ENCODE measurements at regions of chr2 and their contacts with region 1.

Region 1: DNA sequence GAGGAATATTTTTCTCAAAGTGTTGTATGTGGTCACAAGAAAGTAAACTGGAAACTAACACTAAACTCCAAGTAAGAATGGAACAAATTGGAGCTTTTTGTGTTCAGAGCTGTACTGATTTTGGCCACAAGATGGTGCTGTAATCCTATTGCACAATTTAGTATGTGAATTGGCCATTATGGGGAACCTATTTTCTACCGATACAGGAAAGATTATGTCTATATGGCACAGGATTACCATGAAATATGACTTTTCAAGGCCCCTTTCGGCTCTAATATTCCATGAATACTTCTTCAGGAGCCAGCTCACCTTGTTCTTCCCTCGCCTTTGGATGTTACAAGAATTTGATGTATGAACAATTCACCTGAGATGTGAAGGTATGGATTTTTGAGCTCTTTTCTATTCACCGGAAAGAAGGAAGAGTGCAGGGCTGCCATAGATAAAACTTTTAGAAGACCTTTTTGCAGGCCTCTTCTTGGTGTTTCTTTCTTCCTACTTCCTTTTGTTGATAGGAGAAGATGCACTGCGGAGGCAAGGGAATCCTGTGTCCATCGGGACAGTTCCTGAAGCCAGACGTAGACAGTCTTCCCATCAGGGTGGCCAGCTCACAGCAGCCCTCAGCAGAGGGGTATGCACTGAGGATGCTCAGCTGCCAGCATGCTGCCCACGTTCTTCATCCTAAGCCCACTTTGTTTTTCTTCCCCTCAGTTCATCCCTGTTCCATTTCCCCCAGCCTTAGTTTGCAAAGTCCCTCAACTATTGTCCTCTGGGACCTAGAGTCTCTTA is 13.3 kb downstream of the MRPL44 start:
- DNase-seq: peak in 1 of 2 experiments; percentile 64
- ATAC-seq: peak; percentile 74 to 83; a peak in 5 of 6 replicates
- H3K4me3 ChIP-seq: no peak overlapping the region
- H3K27ac ChIP-seq: no peak overlapping the region
- H3K4me1 ChIP-seq: no peaks in the 10 kb centered on the region
- CTCF ChIP-seq: peak; percentile 96
- EP300 ChIP-seq: no peak
- POLR2A ChIP-seq: no peak
- RAD21 ChIP-seq: peak; percentile 93 to 96

Region 2: GRCh38 chr2:223959688-223960087 is 10.8 kb before region 1 on chr2:
- CTCF ChIA-PET with region 1: interaction called, 31 read pairs
- POLR2A ChIA-PET with region 1: no interaction called
- DNase-seq: no peak
- ATAC-seq: no peak
- H3K4me3 ChIP-seq: no peak overlapping the region
- H3K27ac ChIP-seq: no peak overlapping the region
- H3K4me1 ChIP-seq: peaks cover 21% of the 10 kb centered on the region; the same call in 2 of the 3 replicates
- CTCF ChIP-seq: no peak
- EP300 ChIP-seq: no peak
- POLR2A ChIP-seq: no peak
- RAD21 ChIP-seq: no peak

Region 3: DNA sequence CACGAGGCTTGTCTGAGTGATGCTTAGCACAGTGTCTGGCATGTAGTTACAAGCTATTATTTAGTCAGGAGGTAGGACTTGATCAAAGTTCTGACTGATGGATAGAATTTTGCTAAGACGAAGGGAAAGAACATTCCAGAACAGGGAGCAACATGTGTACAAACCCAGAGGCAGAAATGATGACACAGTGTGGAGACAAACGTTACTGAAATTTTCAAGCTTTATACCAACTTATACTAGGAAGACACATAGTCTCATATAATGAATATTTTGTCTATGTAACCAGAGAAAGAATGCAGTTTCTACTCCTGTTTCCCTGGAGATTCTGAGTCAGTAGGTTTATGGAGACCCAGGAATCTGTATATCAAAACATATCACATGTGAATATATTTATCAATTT is 308.0 kb after region 1 on chr2:
- CTCF ChIA-PET with region 1: interaction called, 148 read pairs
- POLR2A ChIA-PET with region 1: no interaction called
- DNase-seq: no peak
- ATAC-seq: no peak; a peak in 2 of 6 replicates
- H3K4me3 ChIP-seq: no peak overlapping the region
- H3K27ac ChIP-seq: no peak overlapping the region
- H3K4me1 ChIP-seq: no peaks in the 10 kb centered on the region
- CTCF ChIP-seq: no peak
- EP300 ChIP-seq: no peak
- POLR2A ChIP-seq: no peak
- RAD21 ChIP-seq: no peak

Region 4: DNA sequence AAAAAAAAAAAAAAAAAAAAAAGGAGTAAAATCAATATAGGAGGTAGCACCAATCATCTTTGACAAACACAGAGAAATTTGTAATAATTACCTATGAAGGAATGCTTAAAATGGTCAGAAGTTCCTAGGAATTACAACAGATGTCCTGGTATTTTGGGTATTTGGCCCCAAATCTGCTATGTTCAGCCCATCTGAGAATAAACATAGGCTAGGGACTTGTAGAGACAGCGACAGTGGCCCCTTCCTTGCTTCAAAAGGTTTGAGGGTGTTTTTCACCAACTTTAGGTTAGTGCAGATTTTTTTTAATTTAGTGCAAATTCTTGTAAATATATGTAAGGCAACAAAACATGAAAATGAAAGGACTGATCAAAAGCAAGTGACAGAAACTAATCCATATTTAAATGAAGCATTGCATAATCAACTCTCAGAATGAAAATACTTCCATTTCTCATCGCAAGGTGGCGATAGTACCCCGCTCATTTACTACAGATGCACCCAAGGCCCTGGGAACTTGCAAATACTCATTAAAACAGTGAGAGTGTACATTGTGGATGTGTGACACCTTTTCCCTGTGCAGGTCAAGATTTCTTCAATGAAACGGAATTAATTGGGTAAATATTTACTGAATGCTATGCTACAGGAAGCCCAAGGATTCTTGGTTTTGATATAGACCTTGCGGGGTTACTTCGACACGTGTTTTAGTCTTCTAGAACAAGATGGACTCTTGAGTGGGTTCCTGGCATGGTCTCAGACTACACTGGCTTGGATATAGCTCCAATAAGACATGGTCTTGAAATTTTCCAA is 386.8 kb after region 1 on chr2:
- CTCF ChIA-PET with region 1: interaction called, 16 read pairs
- POLR2A ChIA-PET with region 1: no interaction called
- DNase-seq: peak; percentile 47 to 69
- ATAC-seq: peak; percentile 82 to 88
- H3K4me3 ChIP-seq: no peak overlapping the region
- H3K27ac ChIP-seq: no peak overlapping the region
- H3K4me1 ChIP-seq: no peaks in the 10 kb centered on the region
- CTCF ChIP-seq: peak; percentile 91
- EP300 ChIP-seq: no peak
- POLR2A ChIP-seq: no peak
- RAD21 ChIP-seq: peak; percentile 93

Region 5: DNA sequence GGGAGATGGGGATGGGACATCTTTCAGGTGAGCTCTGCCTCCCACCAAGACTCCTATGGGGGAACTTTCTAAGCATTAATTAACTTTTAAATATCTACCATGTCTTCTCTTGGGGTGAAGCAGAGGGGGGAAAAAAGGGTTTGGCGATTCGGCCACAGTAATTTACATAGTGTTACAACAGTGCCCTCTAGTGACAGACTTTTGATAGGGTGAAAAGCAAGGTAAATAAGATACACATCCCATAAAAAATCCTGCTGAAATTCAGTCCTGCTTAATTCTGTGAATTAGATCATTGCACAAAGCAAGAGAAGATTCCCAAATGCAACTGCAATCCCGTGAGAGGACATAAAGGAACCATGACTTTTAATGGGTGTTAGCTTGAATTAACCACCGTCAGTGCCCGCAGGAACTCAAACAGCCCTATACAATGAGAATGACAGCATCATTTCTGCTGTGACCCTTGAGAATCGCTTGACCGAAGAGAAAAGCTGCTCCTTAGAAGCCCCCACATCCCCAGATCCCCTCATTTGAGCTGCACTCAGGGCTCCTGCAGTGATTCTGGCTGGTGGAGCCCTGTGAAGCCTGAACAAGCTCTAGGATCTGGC is 398.6 kb after region 1 on chr2:
- CTCF ChIA-PET with region 1: interaction called, 24 read pairs
- POLR2A ChIA-PET with region 1: no interaction called
- DNase-seq: peak; percentile 15 to 47
- ATAC-seq: peak; percentile 64 to 78; a peak in 3 of 6 replicates
- H3K4me3 ChIP-seq: no peak overlapping the region
- H3K27ac ChIP-seq: no peak overlapping the region
- H3K4me1 ChIP-seq: no peaks in the 10 kb centered on the region
- CTCF ChIP-seq: peak; percentile 84
- EP300 ChIP-seq: no peak
- POLR2A ChIP-seq: no peak
- RAD21 ChIP-seq: peak; percentile 64 to 74